Head of caudate nucleus (tissue), 42 donors: ENCODE measurements at regions of chr3 and their contacts with region 1.

Region 1: DNA sequence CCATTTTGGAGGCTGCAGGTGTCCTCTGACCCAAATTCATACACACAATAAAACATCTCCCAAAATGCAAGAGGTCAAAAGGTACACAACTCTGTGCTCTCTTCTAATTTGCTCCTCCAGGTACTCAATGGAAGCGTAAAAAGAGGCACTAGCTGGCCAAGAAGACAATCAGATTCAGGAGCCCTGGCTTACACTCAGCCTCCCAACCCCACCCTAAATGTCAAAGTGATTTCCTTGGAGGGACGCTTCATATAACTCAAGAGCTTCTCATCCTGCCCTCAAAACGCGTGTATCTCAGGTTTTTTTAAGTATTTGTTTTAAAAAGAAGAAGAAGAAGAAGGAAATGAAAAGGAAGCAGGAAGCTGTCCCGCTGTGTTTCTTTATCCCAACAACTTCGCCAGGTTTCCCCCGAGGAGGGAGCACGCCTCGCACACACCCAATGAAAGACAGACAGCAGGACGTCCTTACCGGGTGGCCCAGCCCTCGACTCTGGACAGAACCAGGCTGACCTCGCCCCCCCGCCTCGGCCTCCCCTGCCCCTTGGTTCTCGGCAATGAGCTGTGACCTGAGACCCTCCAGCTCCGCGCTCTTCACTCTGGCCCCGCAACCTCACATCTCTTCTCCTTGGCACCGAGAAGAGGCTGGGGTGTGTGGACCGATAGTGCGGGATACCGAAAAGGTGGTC is 620.7 kb upstream of the ZNF385D start:
- DNase-seq: peak in 1 of 42 donors; percentile 36

Region 2: DNA sequence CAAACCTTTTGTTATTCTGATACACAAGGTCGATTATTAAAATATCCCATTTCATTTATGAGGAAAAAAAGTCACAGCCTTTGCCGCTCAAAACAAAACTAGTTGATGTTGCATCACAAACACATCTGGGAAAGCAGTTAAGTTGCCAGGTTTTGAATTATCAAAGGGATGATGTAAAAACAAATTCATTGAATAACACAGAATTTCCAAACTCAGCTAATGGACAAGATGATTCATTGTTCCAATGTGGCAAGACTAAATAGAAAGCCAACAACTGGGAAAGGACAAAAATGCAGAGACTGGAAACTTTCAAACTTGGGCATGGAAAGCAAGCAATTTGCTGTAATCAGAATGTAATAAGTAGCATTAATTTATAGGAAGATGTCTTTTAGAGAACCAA is 10.8 kb before region 1 on chr3:
- intact Hi-C with region 1: loop called (anchors 2 kb)
- DNase-seq: no peak

Region 3: DNA sequence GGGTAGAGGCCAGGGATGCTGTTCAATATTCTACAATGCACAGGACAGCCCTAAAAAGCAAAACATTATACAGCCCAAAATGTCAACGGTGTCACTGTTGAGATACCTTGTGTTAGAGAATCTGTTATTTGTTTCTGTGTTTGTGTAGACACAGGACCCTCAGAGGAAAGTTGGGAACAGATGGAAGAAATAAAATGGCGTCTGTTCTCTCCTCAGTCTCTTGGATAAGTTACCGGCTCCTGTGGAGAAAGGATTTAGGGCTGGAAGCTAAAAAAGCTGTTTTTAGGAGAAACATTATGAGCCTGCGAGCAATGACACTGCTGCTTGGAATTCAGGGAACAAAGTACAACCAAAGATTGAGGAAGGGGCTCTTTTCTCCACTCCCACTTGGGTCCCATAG is 67.9 kb after region 1 on chr3:
- intact Hi-C with region 1: no loop called
- DNase-seq: no peak

Region 4: GRCh38 chr3:22713936-22714335 is 342.2 kb after region 1 on chr3:
- intact Hi-C with region 1: no loop called
- DNase-seq: no peak